ENCODE measurements at regions of chr22 and their contacts with region 1.

Region 1: GRCh38 chr22:26589845-26590736 is at the start of gene TPST2:
- DNase-seq: peak; percentile 93
- ATAC-seq: peak; percentile 94
- total RNA-seq, gene TPST2: 29.1 TPM

Region 2: DNA sequence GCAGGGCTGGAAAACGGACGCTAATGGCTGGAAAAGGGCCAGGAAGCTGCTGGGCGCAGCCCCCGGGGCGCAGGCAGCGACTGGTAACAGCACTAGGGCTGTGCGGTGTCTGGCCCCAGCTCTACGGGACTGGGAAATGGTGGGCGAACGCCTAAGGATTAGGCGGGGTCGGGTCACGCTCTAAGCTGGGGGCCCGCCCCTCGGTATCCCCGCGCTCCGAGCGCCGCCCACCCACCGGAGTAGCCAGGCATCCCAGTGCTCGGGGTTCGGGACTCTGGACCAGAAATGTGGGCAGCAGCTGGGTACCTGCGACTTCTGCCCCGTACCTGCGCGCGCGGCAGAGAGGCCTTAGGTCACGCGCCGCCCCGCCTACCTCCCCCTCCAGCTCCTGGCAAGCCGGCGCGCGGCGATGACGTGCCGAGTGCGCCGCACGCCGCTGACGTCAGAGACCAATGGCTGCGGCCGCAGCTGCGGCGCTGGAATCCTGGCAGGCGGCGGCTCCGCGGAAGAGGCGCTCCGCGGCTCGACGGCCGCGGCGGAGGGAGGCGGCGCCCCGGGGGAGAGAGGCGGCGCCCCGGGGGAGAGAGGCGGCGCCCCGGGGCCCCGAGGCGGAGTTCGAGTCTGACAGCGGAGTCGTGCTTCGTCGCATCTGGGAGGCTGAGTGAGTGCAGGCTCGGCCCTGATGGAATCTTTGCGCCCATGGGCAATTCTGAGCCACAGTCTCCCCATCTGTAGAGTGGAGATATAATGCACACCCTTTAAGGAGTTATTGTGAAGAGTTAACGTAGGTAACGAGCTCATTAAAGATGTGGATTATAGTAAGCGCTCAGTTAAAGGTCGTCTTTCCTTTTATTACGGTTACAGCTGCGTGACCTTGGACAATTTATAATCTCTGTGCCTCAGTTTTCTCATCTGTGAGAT is 106.4 kb before region 1 on chr22 and contains the starts of genes HPS4 and SRRD:
- intact Hi-C with region 1: loop called (anchors 5 kb)
- DNase-seq: peak; percentile 96
- ATAC-seq: peak; percentile 92
- total RNA-seq, gene HPS4: 8.5 TPM
- total RNA-seq, gene SRRD: 20.9 TPM

Region 3: DNA sequence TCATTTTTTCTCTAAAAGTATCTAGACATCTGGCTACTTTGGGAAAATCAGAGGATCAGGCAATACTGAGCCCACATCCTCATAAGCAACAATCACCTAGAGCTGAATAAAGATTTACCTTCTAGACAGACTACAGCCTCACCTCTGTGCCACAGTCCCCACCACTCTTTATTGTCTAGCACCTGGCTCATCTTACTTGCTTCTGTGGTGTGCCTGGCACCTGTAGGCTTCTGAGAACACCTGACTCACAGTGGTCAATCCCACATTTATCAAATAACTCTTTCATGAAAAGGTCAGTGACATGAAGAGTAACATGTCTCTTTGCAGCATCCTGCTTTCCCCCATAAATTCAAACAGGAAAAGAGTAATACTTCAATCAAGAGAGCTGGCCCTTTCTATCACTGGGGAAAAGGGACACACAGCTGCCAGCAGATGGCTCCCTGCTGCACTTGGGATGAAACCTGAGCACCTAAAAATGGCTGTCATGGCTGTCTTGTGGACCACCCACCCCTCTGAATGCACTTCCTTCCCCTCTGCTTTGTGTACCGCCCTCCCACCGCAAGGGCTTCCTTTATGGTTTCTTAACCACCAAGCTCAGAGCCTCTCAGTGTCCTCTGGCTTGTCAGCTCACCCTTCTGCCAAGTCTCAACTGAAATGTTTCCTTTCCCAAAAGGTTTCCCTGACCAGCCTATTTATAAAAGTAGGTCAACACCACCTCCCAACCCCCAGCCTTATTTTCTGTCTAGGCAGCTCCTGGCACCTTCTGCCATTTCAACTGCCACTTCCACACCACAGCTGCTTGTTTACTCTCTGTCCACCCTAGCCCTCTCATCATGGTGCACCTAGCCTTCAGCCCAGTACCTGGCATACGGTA is 87.2 kb before region 1 on chr22:
- intact Hi-C with region 1: loop called (anchors 1 kb)
- DNase-seq: no peak
- ATAC-seq: peak; percentile 92

Region 4: GRCh38 chr22:26550498-26551033 is 39.5 kb before region 1 on chr22:
- intact Hi-C with region 1: loop called (anchors 2 kb)
- DNase-seq: peak; percentile 83
- ATAC-seq: peak; percentile 72

Region 5: GRCh38 chr22:26632422-26633155 is 42.5 kb after region 1 on chr22:
- intact Hi-C with region 1: no loop called
- DNase-seq: no peak
- ATAC-seq: peak; percentile 31

Region 6: DNA sequence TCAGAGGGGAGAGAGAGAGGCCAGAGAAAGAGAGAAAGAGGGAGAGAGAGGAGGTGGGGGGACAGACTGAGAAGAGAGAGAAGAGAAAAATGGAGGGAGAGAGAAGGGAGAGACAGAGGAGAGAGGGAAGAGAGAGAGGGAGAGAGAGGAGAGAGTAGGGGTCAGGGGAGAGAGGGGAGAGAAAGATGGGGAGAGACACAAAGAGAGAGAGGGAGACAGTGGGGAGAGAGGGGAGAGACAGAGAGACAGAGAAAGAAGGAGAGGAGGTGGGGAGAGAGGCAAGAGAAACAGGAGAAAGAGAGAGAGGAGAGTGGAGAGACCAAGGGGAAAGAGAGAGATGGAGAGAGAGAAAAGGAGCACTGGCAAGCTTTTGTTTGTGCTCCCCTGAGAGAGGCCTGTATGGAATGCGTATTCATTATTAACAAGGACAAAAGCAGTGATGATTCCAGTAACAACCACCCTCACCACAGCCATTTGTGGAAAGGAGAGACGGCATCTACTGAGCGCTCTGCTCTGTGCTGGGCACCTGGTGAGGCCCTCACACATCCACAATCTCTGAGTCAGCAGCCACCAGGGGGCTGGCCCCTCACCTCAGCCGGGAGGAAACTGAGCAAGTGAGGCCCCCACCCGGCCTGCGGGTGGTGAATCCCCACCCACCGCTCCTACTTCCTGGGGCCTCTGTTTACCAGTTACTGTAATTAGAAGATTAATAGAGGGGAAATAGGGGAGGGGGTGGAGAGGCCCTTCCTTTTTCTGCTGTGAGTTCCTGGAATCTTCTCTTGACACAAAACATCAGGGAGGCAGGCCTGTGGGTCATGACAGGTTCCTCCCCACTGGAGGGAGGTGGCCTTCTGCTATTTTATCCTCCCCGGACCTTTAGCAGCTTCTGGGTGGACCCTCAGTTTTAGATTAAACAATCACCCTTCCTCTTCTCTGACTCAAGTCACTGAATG is 52.6 kb after region 1 on chr22:
- intact Hi-C with region 1: no loop called
- DNase-seq: no peak
- ATAC-seq: no peak

Measured in Right ventricle myocardium inferior (tissue), 1 donor.